ENCODE measurements at regions of chr4 and their contacts with region 1.

Region 1: DNA sequence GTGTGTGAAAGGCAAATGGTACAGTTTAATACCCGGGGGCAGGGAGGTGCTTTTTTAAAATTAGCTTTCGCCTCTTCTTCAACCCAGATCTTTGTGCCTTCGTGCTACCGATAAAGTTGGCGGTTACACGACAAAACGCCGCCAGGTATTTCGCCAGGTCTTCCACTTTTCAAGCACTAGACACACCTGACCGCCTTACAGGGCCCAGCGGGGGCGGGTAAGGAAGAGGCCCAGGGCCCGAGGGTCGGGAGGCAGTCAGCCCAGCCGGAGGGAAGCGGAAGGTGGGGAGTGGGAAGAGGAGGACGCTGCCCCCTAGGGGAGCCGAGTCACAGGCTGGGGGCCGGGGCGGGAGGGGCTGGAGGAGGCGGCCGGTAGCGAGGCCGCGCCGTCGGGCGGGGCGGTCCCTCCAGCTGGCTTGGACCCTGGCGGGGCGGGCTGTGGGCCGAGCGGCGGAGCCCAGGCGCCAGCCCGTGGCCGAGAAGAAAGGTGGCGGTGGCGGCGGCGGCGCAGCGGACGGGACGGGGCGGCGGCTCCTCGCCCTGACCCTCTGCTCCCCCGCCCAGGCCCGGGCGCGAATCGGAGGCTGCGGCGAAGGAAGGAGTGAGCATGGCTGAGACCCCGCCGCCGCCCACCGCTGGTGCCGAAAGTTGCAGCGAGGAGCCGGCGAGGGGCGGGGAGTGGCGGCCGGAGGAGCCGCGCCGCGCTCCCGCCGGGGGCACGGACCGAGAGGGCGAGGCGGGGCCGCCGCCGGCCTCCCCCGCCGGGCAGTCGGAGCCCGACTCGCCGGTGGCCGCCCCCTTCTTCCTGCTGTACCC is 16.2 kb downstream of the UTP3 start:
- DNase-seq: peak; percentile 89
- ATAC-seq: peak; percentile 88

Region 2: DNA sequence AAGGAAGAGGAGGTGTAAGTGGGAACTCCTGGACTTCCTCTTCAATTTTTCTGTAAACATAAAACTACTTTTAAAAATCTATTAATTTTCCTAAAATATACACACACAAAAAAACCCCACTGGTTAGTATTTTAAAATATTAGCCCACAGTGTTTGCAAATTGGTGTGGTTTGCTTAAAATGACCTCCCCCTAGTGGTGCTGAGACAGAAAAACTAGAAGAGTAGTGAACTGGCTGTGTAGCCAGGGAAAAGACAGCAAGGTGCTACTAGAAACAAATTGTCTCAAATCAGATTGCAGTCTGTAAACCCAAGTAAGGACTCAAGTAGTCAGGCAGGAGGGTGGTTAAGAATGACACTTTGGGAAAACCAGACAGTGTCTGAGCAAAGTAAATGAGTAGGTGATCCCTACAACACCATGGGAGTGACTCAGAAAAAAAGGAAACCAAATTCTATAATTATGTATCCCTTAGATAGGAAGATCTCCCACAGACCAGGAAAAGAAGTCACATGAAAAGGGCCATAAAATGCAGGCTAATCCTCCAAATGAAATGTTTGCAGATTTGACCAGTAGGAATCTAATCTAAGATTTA is 160.2 kb before region 1 on chr4:
- intact Hi-C with region 1: no loop called
- DNase-seq: no peak
- ATAC-seq: no peak

Region 3: GRCh38 chr4:70624226-70624793 is 80.2 kb before region 1 on chr4:
- intact Hi-C with region 1: no loop called
- DNase-seq: no peak
- ATAC-seq: no peak

Region 4: DNA sequence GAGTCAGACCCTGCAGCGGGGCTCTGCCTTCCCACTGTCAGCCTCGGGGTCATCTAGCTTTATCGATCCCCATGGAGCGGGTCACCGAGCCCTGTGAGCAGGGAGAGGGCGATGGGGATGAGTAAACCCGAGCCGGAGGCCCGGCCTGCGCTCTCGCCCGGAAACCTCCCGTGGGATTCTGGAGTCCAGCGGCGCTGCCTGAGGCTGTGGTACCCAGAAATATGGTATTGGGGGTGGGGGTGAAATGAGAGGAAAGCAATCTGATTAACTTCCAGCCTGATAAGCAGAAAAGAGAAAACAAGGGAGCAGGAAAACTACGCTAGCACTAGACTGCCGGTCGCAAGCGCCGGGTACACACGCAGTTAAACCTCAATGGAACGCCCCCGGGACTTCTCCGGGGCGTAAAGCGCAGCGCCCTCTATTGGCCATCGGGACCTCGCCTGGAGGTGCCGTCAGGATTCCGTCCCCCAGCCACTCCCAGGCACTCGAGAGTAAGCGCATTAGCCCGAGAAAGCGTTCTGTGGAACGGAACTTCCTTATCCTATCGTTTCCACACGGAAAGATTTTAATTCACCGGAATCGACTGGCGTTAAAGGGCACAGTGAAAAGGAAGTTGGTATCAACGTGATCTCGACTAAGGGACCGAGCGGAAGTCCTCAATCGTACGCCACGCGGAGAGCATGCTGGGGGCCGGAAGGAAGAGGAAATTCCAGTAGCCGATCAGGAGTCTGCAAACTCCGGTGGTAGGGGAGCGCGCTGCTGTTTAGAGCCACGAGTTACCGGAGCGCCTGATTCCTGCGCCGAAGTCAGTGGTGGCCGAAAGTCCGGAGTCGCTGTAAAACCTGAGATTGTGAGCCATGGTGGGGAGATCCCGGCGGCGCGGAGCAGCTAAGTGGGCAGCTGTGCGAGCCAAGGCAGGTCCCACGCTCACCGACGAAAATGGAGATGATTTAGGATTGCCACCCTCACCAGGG is 16.4 kb before region 1 on chr4 and contains the start of gene UTP3:
- intact Hi-C with region 1: loop called (anchors 2 kb)
- DNase-seq: peak; percentile 96
- ATAC-seq: peak; percentile 98
- total RNA-seq, gene UTP3: 15.0 TPM

Region 5: DNA sequence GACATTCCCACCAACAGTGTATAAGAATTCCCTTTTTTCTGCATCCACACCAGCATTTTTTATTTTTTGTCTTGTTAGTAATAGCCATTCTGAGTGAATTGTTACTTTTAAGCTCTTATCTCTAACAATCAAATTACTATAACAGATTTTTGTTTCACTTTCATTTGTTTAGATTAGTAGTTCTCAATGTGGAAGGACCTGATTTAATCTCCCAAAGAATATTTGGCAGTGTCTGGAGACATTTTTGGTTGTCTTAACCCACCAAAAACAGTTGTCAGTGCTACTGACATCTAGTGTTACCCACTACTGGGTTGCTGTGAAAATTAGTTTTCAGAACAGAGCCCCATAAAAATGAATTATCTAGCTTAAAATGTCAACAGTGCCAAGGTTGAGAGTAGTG is 55.1 kb after region 1 on chr4:
- intact Hi-C with region 1: no loop called
- DNase-seq: no peak
- ATAC-seq: no peak

Region 6: DNA sequence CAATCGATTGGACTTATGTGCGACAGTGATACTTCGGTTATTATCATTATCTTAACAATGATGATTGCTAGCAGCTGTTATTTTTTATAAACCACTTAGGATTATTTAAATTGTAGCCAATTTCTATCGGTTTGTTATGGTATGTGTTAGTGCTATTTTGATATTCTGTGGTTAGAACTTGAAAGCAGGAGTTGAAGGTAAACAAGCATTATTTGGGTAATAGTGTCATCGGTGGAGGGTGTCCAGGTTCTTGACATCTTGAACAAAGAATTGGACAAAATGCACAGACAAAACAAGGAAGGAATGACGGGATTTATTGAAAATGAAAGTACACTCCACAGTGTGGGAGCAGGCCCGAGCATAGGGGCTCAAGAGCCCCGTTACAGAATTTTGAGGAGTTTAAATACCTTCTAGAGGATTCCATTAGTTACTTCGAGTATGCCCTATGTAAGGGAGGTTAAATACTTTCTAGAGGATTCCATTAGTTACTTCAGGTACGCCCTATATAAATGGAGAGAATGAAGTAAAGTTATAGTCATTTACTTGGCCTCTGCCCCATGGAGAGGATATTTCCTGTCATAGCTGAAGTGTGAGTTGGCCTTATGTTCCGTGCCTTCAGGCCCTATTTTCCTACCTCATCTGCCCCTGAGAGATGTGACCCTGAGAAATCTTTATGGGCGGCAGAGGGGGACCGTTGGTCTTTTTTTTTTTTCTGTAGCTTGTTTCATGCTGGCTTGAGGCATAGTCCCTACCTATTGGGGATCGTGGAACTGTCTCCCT is 210.7 kb after region 1 on chr4:
- intact Hi-C with region 1: no loop called
- DNase-seq: no peak
- ATAC-seq: no peak